PC-9 (cell line): ENCODE measurements at regions of chr7 and their contacts with region 1.

Region 1: GRCh38 chr7:138565451-138566114 is 105.5 kb downstream of the TRIM24 start:
- DNase-seq: peak in 1 of 2 experiments; percentile 43
- H3K4me3 ChIP-seq: 0 out of 2 replicates have a peak overlapping the region, but pooled peaks have one; percentile 18
- H3K27ac ChIP-seq: no peak overlapping the region
- H3K4me1 ChIP-seq: peaks cover 18% of the 10 kb centered on the region
- H3K27me3 ChIP-seq: no peaks in the 10 kb centered on the region
- CTCF ChIP-seq: no peak

Region 2: DNA sequence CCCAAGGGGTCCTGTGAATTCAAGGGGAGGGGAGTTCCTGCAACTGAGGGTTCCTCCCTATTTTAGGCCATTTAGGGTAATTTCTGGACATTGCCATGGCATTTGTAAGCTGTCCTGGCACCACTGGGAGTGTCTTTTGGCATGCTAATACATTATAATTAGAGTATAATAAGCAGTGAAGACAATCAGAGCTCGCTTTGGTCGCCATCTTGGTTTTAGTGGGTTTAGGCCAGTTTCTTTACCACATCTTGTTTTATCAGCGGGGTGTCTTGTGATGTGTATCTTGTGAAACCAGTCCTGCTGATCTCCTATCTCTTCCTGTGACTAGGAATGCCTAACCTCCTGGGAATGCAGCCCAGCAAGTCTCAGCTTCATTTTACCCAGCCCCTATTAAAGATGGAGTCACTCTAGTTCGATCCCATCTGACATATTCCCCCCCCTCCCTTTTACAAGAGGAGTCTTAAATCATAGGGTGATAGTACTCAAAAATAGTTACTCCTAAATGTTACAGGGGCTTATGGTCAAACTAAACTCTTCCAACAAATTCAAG is 92.3 kb after region 1 on chr7:
- CTCF ChIA-PET with region 1: no interaction called
- POLR2A ChIA-PET with region 1: no interaction called
- intact Hi-C with region 1: loop called (anchors 2 kb)
- DNase-seq: peak; percentile 60 to 88
- H3K4me3 ChIP-seq: peak overlapping the region; percentile 5; the same call in 1 of the 2 replicates
- H3K27ac ChIP-seq: peak overlapping the region; percentile 48
- H3K4me1 ChIP-seq: peaks cover 34% of the 10 kb centered on the region
- H3K27me3 ChIP-seq: no peaks in the 10 kb centered on the region
- CTCF ChIP-seq: no peak